IMR-90 (cell line): ENCODE measurements at regions of chr11 and their contacts with region 1.

Region 1: GRCh38 chr11:57345555-57346211 is 7.5 kb downstream of the P2RX3 start:
- DNase-seq: peak; percentile 64
- ATAC-seq: peak; percentile 81
- H3K4me3 ChIP-seq: no peak overlapping the region
- H3K27ac ChIP-seq: no peak overlapping the region
- H3K4me1 ChIP-seq: peaks cover 2% of the 10 kb centered on the region; the same call in 1 of the 2 replicates
- H3K27me3 ChIP-seq: peaks cover 9% of the 10 kb centered on the region; the same call in 1 of the 2 replicates
- CTCF ChIP-seq: peak; percentile 66
- POLR2A ChIP-seq: no peak
- RAD21 ChIP-seq: peak; percentile 80

Region 2: DNA sequence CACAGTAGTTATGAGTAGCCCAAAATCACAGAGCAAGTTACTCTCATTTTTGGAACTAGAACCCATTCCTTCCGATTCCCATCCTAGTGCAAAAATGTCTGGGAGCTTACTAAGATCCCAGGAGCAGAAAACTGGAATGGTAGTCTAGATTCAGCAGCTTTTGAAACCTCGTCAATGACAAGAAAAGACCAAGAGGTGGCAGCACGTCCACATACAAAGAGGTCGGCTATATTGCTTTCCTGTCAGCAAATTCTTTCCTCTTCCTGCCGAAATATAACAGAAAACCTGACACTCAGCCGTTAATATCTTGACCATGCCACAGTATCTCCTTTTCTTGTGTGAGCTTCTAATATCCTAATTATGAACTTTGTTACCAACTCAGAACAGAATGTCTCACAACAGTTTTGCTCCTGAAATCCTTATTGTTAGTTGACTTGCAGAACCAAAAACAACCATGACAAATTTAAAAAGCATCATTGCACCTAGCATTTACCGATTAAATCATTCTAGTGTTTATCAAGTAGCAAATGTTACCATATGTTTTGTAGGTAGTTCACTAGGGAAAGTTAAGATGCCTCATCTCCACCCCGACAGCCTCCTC is 504.4 kb before region 1 on chr11:
- CTCF ChIA-PET with region 1: no interaction called
- POLR2A ChIA-PET with region 1: no interaction called
- dilution Hi-C with region 1: no loop called
- in situ Hi-C with region 1: loop called (anchors 25 kb)
- intact Hi-C with region 1: loop called (anchors 5 kb)
- DNase-seq: peak; percentile 56
- ATAC-seq: peak; percentile 83
- H3K4me3 ChIP-seq: no peak overlapping the region
- H3K27ac ChIP-seq: no peak overlapping the region
- H3K4me1 ChIP-seq: no peaks in the 10 kb centered on the region
- H3K27me3 ChIP-seq: no peaks in the 10 kb centered on the region
- CTCF ChIP-seq: peak; percentile 73
- POLR2A ChIP-seq: no peak
- RAD21 ChIP-seq: peak; percentile 84

Region 3: GRCh38 chr11:57456960-57457642 is 111.4 kb after region 1 on chr11:
- CTCF ChIA-PET with region 1: interaction called, 7 read pairs
- POLR2A ChIA-PET with region 1: no interaction called
- dilution Hi-C with region 1: no loop called
- in situ Hi-C with region 1: no loop called
- intact Hi-C with region 1: loop called (anchors 2 kb)
- DNase-seq: peak; percentile 77
- ATAC-seq: peak; percentile 89
- H3K4me3 ChIP-seq: no peak overlapping the region
- H3K27ac ChIP-seq: no peak overlapping the region
- H3K4me1 ChIP-seq: peaks cover 3% of the 10 kb centered on the region; the same call in 1 of the 2 replicates
- H3K27me3 ChIP-seq: peaks cover 51% of the 10 kb centered on the region
- CTCF ChIP-seq: peak; percentile 97
- POLR2A ChIP-seq: no peak
- RAD21 ChIP-seq: peak; percentile 92

Region 4: GRCh38 chr11:57530596-57531507 is 185.2 kb after region 1 on chr11 and contains the start of gene TIMM10:
- CTCF ChIA-PET with region 1: no interaction called
- POLR2A ChIA-PET with region 1: no interaction called
- dilution Hi-C with region 1: no loop called
- in situ Hi-C with region 1: loop called (anchors 5 kb)
- intact Hi-C with region 1: loop called (anchors 1 kb)
- DNase-seq: peak; percentile 95
- ATAC-seq: peak; percentile 98
- H3K4me3 ChIP-seq: peak within 1 kb of the TSS; percentile 80
- H3K27ac ChIP-seq: peak within 1 kb of the TSS; percentile 78
- H3K4me1 ChIP-seq: peaks cover 5% of the 10 kb centered on the region; the same call in 1 of the 2 replicates
- H3K27me3 ChIP-seq: peaks cover 3% of the 10 kb centered on the region
- CTCF ChIP-seq: no peak
- POLR2A ChIP-seq: peak; percentile 22; the same call in 1 of the 2 replicates
- RAD21 ChIP-seq: no peak
- total RNA-seq, gene TIMM10: 70.0 and 96.8 TPM in 2 replicates

Region 5: DNA sequence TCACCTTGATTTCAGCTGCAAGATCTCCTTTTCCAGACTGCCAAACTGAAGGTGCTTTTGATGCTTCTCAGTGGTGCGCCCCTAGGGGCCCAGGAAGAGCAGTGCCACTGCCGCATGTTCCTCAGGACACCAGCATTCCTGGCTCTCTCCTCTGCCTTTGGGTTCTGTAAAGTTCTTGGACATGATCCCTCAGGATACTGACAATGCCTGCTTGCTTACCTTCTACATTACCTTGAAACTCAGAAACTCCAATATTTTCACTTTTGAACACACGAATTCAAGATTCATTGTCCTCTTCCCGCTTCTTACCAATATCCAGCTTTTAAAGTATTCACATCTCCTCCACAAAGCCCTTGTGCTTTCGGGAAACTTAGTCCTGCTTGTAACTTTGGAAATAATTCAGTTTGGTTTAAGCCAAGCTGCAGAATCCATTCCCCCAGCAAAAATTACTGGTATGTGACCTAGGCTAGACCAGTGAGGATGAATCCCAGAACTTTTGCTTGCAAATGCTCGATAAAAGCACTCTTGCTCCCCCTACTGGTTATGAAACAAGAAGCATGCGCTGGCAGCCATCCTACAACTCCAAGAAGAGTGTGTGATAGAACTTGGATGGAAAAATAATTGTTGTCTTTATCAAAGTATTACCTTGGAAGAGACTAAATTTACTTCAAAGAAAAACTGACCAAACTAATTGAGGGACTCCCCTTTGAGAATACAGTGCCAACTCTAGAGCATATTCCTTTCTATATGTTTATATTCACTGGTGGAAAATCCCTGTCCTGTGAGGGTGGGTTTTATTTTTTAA is 1178.8 kb after region 1 on chr11:
- CTCF ChIA-PET with region 1: no interaction called
- POLR2A ChIA-PET with region 1: no interaction called
- dilution Hi-C with region 1: no loop called
- in situ Hi-C with region 1: no loop called
- intact Hi-C with region 1: loop called (anchors 10 kb)
- DNase-seq: peak; percentile 89
- ATAC-seq: peak; percentile 92
- H3K4me3 ChIP-seq: peak overlapping the region; percentile 0; the same call in 1 of the 2 replicates
- H3K27ac ChIP-seq: peak overlapping the region; percentile 47; the same call in 1 of the 2 replicates
- H3K4me1 ChIP-seq: peaks cover 2% of the 10 kb centered on the region; the same call in 1 of the 2 replicates
- H3K27me3 ChIP-seq: no peaks in the 10 kb centered on the region
- CTCF ChIP-seq: peak; percentile 85
- POLR2A ChIP-seq: 0 out of 2 replicates have a peak, but pooled peaks have one; percentile 26
- RAD21 ChIP-seq: peak; percentile 74